Motor neuron (in vitro differentiated cells): ENCODE measurements at regions of chr1 and their contacts with region 1.

Region 1: DNA sequence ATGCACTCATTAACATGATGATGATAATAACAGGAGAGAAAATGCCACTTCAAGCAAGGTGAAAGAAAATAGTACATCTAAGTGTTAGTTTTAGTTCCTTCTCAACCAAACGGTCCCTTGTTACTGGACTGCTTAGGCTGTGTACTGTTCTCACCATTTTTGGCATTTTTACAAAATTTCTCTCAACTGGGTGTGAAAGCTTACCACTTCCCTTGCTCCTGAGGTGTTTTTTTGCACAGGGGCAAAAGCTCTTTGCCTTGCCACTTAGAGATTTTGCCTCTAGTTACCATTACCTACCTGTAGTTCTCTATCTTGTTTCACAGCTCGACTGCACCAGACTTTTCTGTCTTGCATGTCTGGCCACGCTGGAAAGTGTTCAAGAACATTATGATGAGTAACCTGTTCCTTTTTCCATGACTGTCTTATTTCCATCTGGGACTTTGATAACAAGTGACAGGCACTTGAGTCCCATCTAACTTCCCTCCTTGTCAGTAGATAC is 10.7 kb downstream of the NEK7 start:
- ATAC-seq: no peak
- H3K4me3 ChIP-seq: no peak overlapping the region
- H3K27ac ChIP-seq: no peak overlapping the region
- H3K4me1 ChIP-seq: peaks cover 11 to 25% of the 10 kb centered on the region in 2 donors

Region 2: GRCh38 chr1:197541411-197541810 is 626.1 kb before region 1 on chr1:
- in situ Hi-C with region 1: no loop called
- ATAC-seq: no peak
- H3K4me3 ChIP-seq: no peak overlapping the region
- H3K27ac ChIP-seq: no peak overlapping the region
- H3K4me1 ChIP-seq: no peaks in the 10 kb centered on the region

Region 3: DNA sequence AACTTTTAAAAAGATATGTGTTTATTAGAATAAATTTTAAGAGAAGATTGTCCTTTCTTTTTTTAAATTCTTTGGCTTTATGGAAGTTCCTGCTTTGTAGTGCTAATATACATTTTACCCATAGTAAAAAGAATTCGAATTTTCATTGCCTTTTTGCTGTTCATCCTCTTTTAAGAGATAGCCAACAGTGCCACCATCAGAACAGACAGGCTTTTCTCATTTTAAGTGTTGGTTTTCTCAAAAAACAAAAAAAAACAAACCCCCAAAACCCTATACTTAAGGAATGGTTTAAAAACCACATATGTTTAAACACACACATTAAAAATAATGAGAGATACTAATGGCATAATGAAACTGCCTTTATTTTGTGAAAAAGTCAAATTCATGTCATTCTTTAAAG is 108.1 kb after region 1 on chr1:
- in situ Hi-C with region 1: loop called in 1 of 9 experiments (anchors 10 kb)
- ATAC-seq: no peak
- H3K4me3 ChIP-seq: no peak overlapping the region
- H3K27ac ChIP-seq: no peak overlapping the region
- H3K4me1 ChIP-seq: peaks cover 0 to 13% of the 10 kb centered on the region in 2 donors

Region 4: DNA sequence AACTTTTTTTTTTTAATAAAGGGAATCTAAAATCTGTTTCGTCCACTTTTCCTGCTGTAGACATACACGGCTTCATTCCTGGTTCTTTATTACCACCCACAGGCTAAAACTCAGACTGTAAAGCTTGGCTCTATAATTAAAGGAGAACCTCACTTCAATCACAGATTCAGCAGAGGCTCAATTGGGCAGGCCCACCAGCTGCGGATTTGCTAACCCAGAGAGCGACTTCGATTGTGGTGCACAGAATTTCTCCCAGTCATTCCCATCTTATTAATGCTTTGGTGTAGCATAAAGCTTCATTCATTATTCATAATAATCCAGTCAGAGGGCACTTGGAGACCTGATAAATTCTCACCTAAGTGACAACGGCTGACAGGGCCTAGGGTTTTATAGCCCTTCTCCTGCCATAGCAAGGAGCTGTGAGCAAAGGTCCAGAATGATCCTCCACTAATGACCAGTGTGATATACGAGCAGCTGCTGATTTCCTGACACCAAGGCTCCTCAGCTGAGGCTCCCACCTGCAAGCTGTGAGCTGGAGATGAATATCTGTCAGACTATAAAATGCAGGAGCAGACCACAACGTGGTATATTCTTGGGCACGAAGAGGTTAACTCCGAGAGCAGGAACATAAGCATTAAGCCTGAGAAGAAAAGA is 224.0 kb after region 1 on chr1:
- in situ Hi-C with region 1: no loop called
- ATAC-seq: peak in 5 of 8 experiments; percentile 93 to 96 (median 94)
- H3K4me3 ChIP-seq: peak overlapping the region in 1 of 5 donors; percentile 1
- H3K27ac ChIP-seq: no peak overlapping the region
- H3K4me1 ChIP-seq: peaks cover 9 to 43% of the 10 kb centered on the region in 2 donors